ENCODE measurements at regions of chr6 and their contacts with region 1.

Region 1: DNA sequence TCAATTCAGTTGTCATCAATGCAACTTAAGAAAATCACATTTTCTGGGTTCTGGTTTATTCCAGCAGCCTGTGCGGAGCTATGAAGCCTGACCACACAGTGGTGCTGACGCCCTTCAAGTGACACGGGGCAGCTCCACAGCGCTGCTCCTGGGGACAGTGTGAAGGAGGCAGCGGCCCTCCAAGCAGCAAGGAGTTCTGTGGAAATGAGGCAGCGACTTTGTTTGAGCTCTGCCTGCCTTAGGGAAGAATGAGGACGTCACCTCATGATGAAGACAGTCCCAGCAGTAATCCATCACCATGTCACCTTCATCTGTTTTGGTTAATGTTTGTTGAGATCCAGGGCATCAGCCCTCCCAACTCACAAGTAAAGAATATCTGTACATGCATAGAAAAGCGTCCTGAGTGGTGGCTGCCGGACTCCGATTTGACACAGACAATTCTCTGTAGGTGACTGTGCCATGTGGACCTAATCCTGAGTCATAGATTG is 168.5 kb upstream of the UST start:
- DNase-seq: peak; percentile 80
- ATAC-seq: peak; percentile 100
- H3K4me3 ChIP-seq: peak overlapping the region; percentile 43; the same call in 1 of the 2 replicates
- H3K27ac ChIP-seq: no peak overlapping the region
- H3K4me1 ChIP-seq: peaks cover 12% of the 10 kb centered on the region; the same call in 1 of the 2 replicates
- H3K27me3 ChIP-seq: no peaks in the 10 kb centered on the region
- CTCF ChIP-seq: peak; percentile 95

Region 2: GRCh38 chr6:148869585-148869984 is 291.3 kb after region 1 on chr6:
- CTCF ChIA-PET with region 1: no interaction called
- POLR2A ChIA-PET with region 1: no interaction called
- intact Hi-C with region 1: loop called (anchors 2 kb)
- DNase-seq: peak; percentile 96
- ATAC-seq: peak; percentile 90
- H3K4me3 ChIP-seq: no peak overlapping the region
- H3K27ac ChIP-seq: peak overlapping the region; percentile 88
- H3K4me1 ChIP-seq: peaks cover 33% of the 10 kb centered on the region
- H3K27me3 ChIP-seq: no peaks in the 10 kb centered on the region
- CTCF ChIP-seq: no peak

Region 3: GRCh38 chr6:148947621-148948444 is 369.5 kb after region 1 on chr6:
- CTCF ChIA-PET with region 1: no interaction called
- POLR2A ChIA-PET with region 1: no interaction called
- intact Hi-C with region 1: loop called (anchors 2 kb)
- DNase-seq: peak; percentile 86
- ATAC-seq: peak; percentile 88
- H3K4me3 ChIP-seq: no peak overlapping the region
- H3K27ac ChIP-seq: no peak overlapping the region
- H3K4me1 ChIP-seq: peaks cover 16% of the 10 kb centered on the region
- H3K27me3 ChIP-seq: no peaks in the 10 kb centered on the region
- CTCF ChIP-seq: peak; percentile 74

Region 4: DNA sequence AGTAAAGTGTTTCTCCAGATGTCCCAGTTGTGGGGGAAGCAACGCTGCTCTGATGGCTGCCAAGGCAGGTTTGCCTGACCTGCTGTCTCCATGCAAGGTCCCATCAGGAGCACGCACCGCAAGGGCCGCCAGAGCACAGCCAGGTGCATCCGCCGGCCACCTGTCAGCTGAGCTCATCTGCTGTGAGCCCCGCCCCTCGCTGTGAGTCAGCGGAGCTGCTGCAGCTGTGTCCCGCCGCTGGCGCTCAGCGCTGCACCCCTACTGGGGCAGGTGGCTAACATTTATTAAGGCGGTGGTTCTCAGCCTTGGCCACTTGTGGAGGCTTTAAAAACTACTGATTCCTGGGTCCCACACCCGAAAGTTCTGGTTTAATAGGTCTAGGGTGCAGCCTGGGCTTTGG is 394.2 kb after region 1 on chr6:
- CTCF ChIA-PET with region 1: interaction called, 11 read pairs
- POLR2A ChIA-PET with region 1: no interaction called
- intact Hi-C with region 1: no loop called
- DNase-seq: peak; percentile 70
- ATAC-seq: peak; percentile 80
- H3K4me3 ChIP-seq: no peak overlapping the region
- H3K27ac ChIP-seq: no peak overlapping the region
- H3K4me1 ChIP-seq: peaks cover 16% of the 10 kb centered on the region
- H3K27me3 ChIP-seq: no peaks in the 10 kb centered on the region
- CTCF ChIP-seq: no peak